CD14-positive monocyte (primary cell): ENCODE measurements at regions of chr1 and their contacts with region 1.

Region 1: DNA sequence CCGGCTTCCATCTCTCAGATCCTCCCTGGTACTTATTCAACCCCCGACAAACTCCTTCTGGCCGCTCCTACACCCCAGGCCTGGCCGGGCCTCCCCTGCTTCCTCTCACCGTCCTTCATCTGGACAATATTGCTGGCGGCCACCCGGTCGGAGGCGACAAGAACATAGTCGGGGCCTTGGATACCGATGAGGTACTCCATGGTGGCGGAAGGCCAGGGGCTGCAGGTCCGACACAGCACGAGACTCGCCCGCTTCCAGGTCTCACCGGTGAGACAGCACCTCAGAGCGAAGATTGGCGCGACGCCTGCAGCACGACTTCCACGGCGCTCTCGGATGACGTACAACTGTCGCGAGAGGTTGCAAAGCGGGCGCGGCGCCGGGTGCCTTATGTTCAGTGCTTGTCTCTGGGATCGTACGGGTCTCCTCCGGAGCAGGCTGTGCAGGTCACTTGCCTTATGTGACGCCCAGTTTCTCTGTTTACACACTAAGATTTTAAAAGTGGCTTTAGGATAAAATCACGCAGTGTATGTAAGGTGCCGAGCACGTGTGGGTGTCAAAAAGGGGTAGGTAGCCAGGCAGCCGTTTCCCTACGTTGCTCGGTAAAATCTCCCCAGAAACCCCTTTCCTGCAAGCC is at the start of gene PSMB2:
- DNase-seq: peak; percentile 90 to 93 (median 93)
- H3K4me3 ChIP-seq: peak within 1 kb of the TSS; percentile 67 to 98 (median 92)
- H3K4me3 Mint-ChIP-seq: peak within 1 kb of the TSS; percentile 99
- H3K27ac ChIP-seq: peak within 1 kb of the TSS; percentile 79 to 89
- H3K27ac Mint-ChIP-seq: peak within 1 kb of the TSS; percentile 93 to 99 (median 98)
- H3K4me1 ChIP-seq: peaks cover 25 to 35% of the 10 kb centered on the region in 2 donors
- H3K4me1 Mint-ChIP-seq: peaks cover 35% of the 10 kb centered on the region
- H3K27me3 ChIP-seq: peaks cover 11 to 15% of the 10 kb centered on the region in 2 donors
- H3K27me3 Mint-ChIP-seq: peaks cover 9 to 25% (median 12%) of the 10 kb centered on the region in 3 donors
- CTCF ChIP-seq: no peak
- polyA plus RNA-seq, gene PSMB2: 27.9 to 84.1 (median 78.6) TPM

Region 2: GRCh38 chr1:35715568-35716002 is 74.2 kb after region 1 on chr1:
- intact Hi-C with region 1: loop called in 1 of 2 experiments (anchors 5 kb)
- DNase-seq: peak; percentile 59 to 68 (median 63)
- H3K4me3 ChIP-seq: no peak overlapping the region
- H3K4me3 Mint-ChIP-seq: peak overlapping the region in 1 of 2 donors; percentile 53
- H3K27ac ChIP-seq: no peak overlapping the region
- H3K27ac Mint-ChIP-seq: peak overlapping the region in 2 of 7 donors; percentile 41 to 46
- H3K4me1 ChIP-seq: peaks cover 19 to 32% of the 10 kb centered on the region in 2 donors
- H3K4me1 Mint-ChIP-seq: peaks cover 28% of the 10 kb centered on the region
- H3K27me3 ChIP-seq: no peaks in the 10 kb centered on the region
- H3K27me3 Mint-ChIP-seq: no peaks in the 10 kb centered on the region
- CTCF ChIP-seq: peak; percentile 89